Naive thymus-derived CD4-positive, alpha-beta T cell (primary cell): ENCODE measurements at regions of chr4 and their contacts with region 1.

Region 1: DNA sequence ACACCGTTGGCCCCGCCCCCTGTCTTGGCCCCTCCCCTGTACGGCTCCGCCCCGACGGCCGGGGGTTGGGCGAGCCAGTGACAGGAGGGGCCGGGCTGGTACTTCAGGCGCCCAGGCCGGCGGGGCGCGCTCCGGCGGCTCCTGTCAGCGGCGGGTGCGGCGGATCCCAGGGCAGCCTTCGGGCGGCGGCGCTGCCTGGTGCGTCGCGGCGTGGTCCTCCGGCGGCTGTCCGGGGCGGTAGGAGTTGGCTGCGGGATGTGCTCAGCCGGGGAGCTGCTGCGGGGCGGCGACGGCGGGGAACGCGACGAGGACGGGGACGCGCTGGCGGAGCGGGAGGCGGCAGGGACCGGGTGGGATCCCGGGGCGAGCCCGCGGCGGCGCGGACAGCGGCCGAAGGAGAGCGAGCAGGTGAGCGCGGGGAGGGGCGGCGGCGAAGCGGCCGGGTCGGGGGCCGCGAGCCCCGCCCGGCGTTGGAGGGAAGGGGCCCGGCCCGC is at the start of gene FAM241A:
- DNase-seq: peak; percentile 81 to 92 (median 88)
- ATAC-seq: peak; percentile 98
- H3K4me3 ChIP-seq: peak within 1 kb of the TSS; percentile 89
- H3K4me3 Mint-ChIP-seq: peak within 1 kb of the TSS; percentile 90 to 99 (median 94)
- H3K27ac ChIP-seq: peak within 1 kb of the TSS; percentile 78
- H3K27ac Mint-ChIP-seq: peak within 1 kb of the TSS; percentile 75 to 98 (median 95)
- H3K4me1 ChIP-seq: peaks cover 0 to 12% of the 10 kb centered on the region in 2 donors
- H3K4me1 Mint-ChIP-seq: peaks cover 16 to 44% (median 40%) of the 10 kb centered on the region in 7 donors
- H3K27me3 ChIP-seq: no peaks in the 10 kb centered on the region
- H3K27me3 Mint-ChIP-seq: peaks cover 0 to 5% (median 0%) of the 10 kb centered on the region in 5 donors
- total RNA-seq, gene FAM241A: 1.2 to 2.4 (median 2.0) TPM

Region 2: GRCh38 chr4:111400741-111401140 is 744.6 kb before region 1 on chr4:
- CTCF ChIA-PET with region 1: no interaction called
- POLR2A ChIA-PET with region 1: no interaction called
- intact Hi-C with region 1: no loop called
- DNase-seq: no peak
- ATAC-seq: no peak
- H3K4me3 ChIP-seq: no peak overlapping the region
- H3K4me3 Mint-ChIP-seq: no peak overlapping the region
- H3K27ac ChIP-seq: no peak overlapping the region
- H3K27ac Mint-ChIP-seq: no peak overlapping the region
- H3K4me1 ChIP-seq: no peaks in the 10 kb centered on the region
- H3K4me1 Mint-ChIP-seq: no peaks in the 10 kb centered on the region
- H3K27me3 ChIP-seq: no peaks in the 10 kb centered on the region
- H3K27me3 Mint-ChIP-seq: no peaks in the 10 kb centered on the region

Region 3: DNA sequence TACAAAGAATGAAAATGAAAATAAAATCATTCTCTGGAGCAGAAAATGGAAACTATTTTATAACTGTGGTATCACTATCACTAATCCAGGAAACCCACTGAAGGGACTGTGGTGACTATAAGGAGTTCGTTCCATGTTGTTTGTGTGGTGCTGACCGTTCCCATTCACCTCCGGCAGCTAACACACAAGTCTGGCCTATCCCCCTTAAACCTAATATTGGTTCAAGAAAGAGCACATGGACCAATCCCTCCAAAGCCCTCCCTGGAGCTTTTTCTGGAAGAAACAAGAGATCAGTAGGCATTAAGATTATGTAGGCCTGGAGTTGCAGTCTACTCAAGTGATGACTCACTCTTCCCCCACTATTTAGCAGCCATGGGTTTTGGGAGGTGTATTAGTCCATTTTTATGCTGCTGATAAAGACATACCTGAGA is 26.0 kb before region 1 on chr4:
- CTCF ChIA-PET with region 1: no interaction called
- POLR2A ChIA-PET with region 1: interaction called, 3 read pairs
- intact Hi-C with region 1: loop called in 1 of 2 experiments (anchors 1 kb)
- DNase-seq: peak in 1 of 9 donors; percentile 41
- ATAC-seq: no peak
- H3K4me3 ChIP-seq: no peak overlapping the region
- H3K4me3 Mint-ChIP-seq: peak overlapping the region in 1 of 10 donors; percentile 65
- H3K27ac ChIP-seq: no peak overlapping the region
- H3K27ac Mint-ChIP-seq: peak overlapping the region in 1 of 9 donors; percentile 94
- H3K4me1 ChIP-seq: no peaks in the 10 kb centered on the region
- H3K4me1 Mint-ChIP-seq: peaks cover 2 to 17% (median 11%) of the 10 kb centered on the region in 7 donors
- H3K27me3 ChIP-seq: no peaks in the 10 kb centered on the region
- H3K27me3 Mint-ChIP-seq: peaks cover 0 to 14% (median 6%) of the 10 kb centered on the region in 5 donors

Region 4: GRCh38 chr4:112167794-112168193 is 22.4 kb after region 1 on chr4:
- CTCF ChIA-PET with region 1: no interaction called
- POLR2A ChIA-PET with region 1: no interaction called
- intact Hi-C with region 1: loop called in 1 of 2 experiments (anchors 2 kb)
- DNase-seq: peak in 7 of 9 donors; percentile 18 to 51 (median 30)
- ATAC-seq: peak; percentile 89
- H3K4me3 ChIP-seq: no peak overlapping the region
- H3K4me3 Mint-ChIP-seq: peak overlapping the region in 6 of 10 donors; percentile 1 to 54 (median 16)
- H3K27ac ChIP-seq: peak overlapping the region; percentile 17
- H3K27ac Mint-ChIP-seq: peak overlapping the region in 7 of 9 donors; percentile 4 to 69 (median 42)
- H3K4me1 ChIP-seq: peaks cover 0 to 12% of the 10 kb centered on the region in 2 donors
- H3K4me1 Mint-ChIP-seq: peaks cover 7 to 58% (median 32%) of the 10 kb centered on the region in 7 donors
- H3K27me3 ChIP-seq: no peaks in the 10 kb centered on the region
- H3K27me3 Mint-ChIP-seq: no peaks in the 10 kb centered on the region

Region 5: GRCh38 chr4:112222219-112222955 is 77.0 kb after region 1 on chr4:
- CTCF ChIA-PET with region 1: no interaction called
- POLR2A ChIA-PET with region 1: no interaction called
- intact Hi-C with region 1: no loop called
- DNase-seq: no peak
- ATAC-seq: no peak
- H3K4me3 ChIP-seq: no peak overlapping the region
- H3K4me3 Mint-ChIP-seq: no peak overlapping the region
- H3K27ac ChIP-seq: no peak overlapping the region
- H3K27ac Mint-ChIP-seq: no peak overlapping the region
- H3K4me1 ChIP-seq: no peaks in the 10 kb centered on the region
- H3K4me1 Mint-ChIP-seq: peaks cover 0 to 7% (median 0%) of the 10 kb centered on the region in 7 donors
- H3K27me3 ChIP-seq: no peaks in the 10 kb centered on the region
- H3K27me3 Mint-ChIP-seq: peaks cover 3 to 12% (median 7%) of the 10 kb centered on the region in 5 donors

Region 6: GRCh38 chr4:112284662-112285411 is 139.5 kb after region 1 on chr4:
- CTCF ChIA-PET with region 1: interaction called, 3 read pairs
- POLR2A ChIA-PET with region 1: no interaction called
- intact Hi-C with region 1: loop called (anchors 1 kb)
- DNase-seq: no peak
- ATAC-seq: no peak
- H3K4me3 ChIP-seq: peak overlapping the region; percentile 94
- H3K4me3 Mint-ChIP-seq: peak overlapping the region; percentile 87 to 97 (median 92)
- H3K27ac ChIP-seq: peak overlapping the region; percentile 81
- H3K27ac Mint-ChIP-seq: peak overlapping the region; percentile 81 to 95 (median 91)
- H3K4me1 ChIP-seq: peaks cover 31 to 54% of the 10 kb centered on the region in 2 donors
- H3K4me1 Mint-ChIP-seq: peaks cover 47 to 88% (median 83%) of the 10 kb centered on the region in 7 donors
- H3K27me3 ChIP-seq: no peaks in the 10 kb centered on the region
- H3K27me3 Mint-ChIP-seq: no peaks in the 10 kb centered on the region

Region 7: GRCh38 chr4:112343330-112344080 is 198.1 kb after region 1 on chr4:
- CTCF ChIA-PET with region 1: no interaction called
- POLR2A ChIA-PET with region 1: no interaction called
- intact Hi-C with region 1: no loop called
- DNase-seq: no peak
- ATAC-seq: no peak
- H3K4me3 ChIP-seq: no peak overlapping the region
- H3K4me3 Mint-ChIP-seq: no peak overlapping the region
- H3K27ac ChIP-seq: no peak overlapping the region
- H3K27ac Mint-ChIP-seq: no peak overlapping the region
- H3K4me1 ChIP-seq: no peaks in the 10 kb centered on the region
- H3K4me1 Mint-ChIP-seq: peaks cover 0 to 9% (median 3%) of the 10 kb centered on the region in 7 donors
- H3K27me3 ChIP-seq: no peaks in the 10 kb centered on the region
- H3K27me3 Mint-ChIP-seq: no peaks in the 10 kb centered on the region

Region 8: DNA sequence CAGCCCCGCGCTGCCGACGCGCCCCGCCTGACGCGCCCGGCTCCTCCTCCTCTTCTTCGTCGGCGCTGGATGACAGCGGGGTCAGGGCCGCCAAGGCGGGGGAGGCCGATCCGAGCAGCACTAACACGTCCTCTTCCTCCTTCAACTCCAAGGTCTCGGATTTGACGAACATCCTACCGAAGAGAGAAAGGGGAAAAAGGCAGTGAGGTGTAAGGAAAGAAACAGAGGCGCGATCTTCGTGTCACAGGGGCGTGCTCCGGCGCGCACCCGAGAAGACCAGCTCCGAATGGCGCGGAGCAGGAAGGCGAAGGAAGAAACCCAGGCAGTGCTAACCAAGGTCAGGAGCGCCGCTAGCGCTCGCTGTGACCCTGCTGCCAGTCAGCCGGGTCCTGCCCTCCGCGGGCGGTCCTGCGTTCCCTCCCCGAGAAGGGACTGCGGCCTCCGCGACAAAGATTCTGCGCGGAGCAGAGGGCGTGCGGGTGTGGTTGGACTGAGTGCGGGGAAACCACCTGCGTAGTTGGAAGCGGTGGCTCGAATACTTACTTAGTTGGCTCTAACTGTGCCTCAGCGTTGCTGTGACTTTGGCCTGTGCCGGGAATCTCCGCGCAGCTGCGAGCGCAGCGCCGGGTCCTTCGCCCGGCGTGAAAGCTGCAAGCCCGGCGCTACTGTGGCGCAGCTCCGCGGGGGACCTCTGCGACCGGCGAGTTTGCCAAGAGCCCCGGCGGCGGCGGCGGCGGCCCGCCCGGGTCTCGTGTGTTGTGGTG is 370.1 kb after region 1 on chr4:
- CTCF ChIA-PET with region 1: no interaction called
- POLR2A ChIA-PET with region 1: no interaction called
- intact Hi-C with region 1: loop called in 1 of 2 experiments (anchors 2 kb)
- DNase-seq: peak in 5 of 9 donors; percentile 21 to 66 (median 40)
- ATAC-seq: peak; percentile 66
- H3K4me3 ChIP-seq: peak overlapping the region; percentile 63
- H3K4me3 Mint-ChIP-seq: peak overlapping the region; percentile 85 to 99 (median 92)
- H3K27ac ChIP-seq: no peak overlapping the region
- H3K27ac Mint-ChIP-seq: peak overlapping the region in 4 of 9 donors; percentile 38 to 86 (median 66)
- H3K4me1 ChIP-seq: peaks cover 13 to 40% of the 10 kb centered on the region in 2 donors
- H3K4me1 Mint-ChIP-seq: peaks cover 37 to 66% (median 59%) of the 10 kb centered on the region in 7 donors
- H3K27me3 ChIP-seq: peaks cover 17 to 69% of the 10 kb centered on the region in 2 donors
- H3K27me3 Mint-ChIP-seq: peaks cover 91 to 99% (median 93%) of the 10 kb centered on the region in 5 donors